ENCODE measurements at regions of chr13 and their contacts with region 1.

Region 1: DNA sequence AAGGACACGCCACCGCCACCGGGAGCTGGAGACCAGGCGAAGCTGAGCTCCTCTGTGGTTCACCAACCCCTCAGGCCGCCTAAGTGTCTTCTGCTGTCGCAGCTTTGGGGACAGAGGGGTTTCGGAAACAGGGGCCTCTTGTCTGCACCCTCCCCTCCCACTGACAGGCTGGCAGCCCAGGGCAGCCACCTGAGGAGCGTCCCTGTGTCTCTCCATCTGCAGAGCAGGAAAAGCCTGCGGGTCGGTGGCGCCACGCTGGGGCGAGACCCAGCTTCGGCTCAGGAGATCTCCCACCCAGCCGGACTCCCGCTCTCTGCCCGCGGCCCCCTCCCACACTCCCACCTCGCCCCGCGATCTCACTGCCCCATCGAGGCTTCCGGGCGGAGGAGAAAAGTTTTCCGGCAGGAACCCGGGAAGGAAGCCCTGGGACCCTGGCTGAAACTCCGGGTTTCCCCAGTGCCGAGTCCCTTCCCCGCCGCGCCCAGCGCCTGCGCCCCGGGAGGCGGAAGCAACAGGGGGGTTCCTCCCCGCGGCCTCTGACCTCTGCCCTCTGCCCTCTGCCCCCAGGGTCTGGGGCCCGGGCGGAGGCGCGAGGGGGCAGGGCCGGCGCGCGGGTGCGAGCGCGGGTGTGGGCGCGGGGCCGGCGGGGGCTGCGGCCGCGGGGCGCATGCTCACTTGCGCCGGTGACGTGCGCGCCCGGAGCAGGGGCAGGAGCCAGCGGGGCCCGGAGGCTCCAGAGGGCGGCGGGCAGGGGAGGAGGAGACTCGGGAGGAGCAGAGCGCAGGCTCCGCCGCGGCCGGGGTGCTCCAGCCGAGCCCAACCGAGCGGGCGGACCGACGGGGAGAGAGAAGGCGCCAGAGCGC is at the start of gene ATP11A:
- DNase-seq: peak; percentile 97
- H3K4me3 ChIP-seq: peak within 1 kb of the TSS; percentile 77 to 99 (median 88)
- H3K27ac ChIP-seq: peak within 1 kb of the TSS; percentile 87 to 95 (median 94)
- H3K4me1 ChIP-seq: peaks cover 0 to 48% (median 33%) of the 10 kb centered on the region in 4 donors
- H3K27me3 ChIP-seq: no peaks in the 10 kb centered on the region
- CTCF ChIP-seq: no peak
- EP300 ChIP-seq: no peak
- POLR2A ChIP-seq: peak in 1 of 2 donors; percentile 14
- total RNA-seq, gene ATP11A: 9.6 to 22.9 (median 15.9) TPM

Region 2: DNA sequence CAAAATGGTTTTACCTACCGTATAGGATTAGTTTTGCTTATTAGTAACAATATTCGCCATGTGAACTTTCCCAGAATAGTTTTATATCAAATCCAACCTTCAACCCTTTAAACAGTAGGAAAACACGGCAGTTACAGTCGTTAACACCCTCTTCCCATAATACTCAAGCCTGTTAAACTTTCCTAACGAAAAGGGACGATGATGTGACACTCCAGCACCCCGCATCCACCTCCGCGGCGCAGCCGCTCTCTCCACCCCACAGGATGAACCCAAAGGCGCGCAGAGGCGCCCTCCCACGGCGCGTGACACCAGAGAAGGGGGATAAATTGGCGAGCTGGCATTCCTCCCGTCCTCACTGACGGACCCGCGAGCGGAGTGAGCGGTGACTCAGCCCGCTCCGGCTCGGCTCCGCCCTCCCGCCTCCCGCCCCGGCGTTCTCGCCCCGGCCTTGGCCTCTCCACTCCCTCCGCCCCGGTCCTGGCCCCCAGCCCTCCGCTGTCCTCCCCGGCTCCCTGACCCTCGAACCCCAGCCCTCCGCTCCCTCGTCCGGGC is 102.2 kb before region 1 on chr13:
- intact Hi-C with region 1: loop called (anchors 5 kb)
- DNase-seq: peak; percentile 95
- H3K4me3 ChIP-seq: peak overlapping the region; percentile 78 to 90 (median 88)
- H3K27ac ChIP-seq: peak overlapping the region; percentile 96 to 99 (median 98)
- H3K4me1 ChIP-seq: peaks cover 0 to 30% (median 17%) of the 10 kb centered on the region in 4 donors
- H3K27me3 ChIP-seq: no peaks in the 10 kb centered on the region
- CTCF ChIP-seq: no peak
- EP300 ChIP-seq: no peak
- POLR2A ChIP-seq: no peak

Region 3: DNA sequence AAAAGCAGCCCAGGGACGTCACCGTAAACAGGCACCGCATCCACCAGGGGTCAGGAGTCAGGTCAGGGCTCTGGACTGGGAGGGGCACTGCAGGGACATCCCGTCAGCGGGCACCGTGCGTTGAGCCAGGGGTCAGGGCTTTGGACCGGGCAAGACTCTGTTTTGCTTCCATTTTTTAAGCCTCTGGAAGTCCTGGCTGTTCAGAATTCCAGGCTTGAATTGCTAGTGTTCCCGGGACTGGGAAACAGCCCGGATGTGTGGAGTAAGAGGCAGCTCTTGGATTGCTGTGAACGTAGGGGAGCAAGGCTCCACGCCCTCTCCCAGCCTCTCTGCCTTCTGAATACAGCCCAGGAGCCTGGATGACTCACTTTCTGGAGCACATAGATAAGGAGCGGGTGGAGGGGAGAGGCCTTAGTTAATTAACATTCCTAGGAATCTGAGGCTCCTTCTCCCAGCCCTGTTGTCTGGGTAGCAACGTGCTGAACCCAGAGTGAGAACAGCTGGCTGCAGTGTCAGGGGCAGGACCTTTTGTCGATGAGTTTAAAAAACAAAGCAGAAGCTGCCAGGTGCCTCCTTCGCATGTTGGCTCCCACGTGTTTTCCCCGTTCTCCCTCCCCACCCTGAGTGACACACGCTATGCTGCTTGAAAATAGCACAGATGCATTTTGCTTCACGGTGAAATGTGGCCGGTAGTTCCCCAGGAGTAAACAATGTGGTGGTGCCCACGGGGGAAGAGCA is 22.2 kb after region 1 on chr13:
- intact Hi-C with region 1: loop called (anchors 1 kb)
- DNase-seq: peak; percentile 95
- H3K4me3 ChIP-seq: peak overlapping the region in 3 of 4 donors; percentile 3 to 35 (median 27)
- H3K27ac ChIP-seq: peak overlapping the region; percentile 68 to 89 (median 85)
- H3K4me1 ChIP-seq: peaks cover 0 to 34% (median 22%) of the 10 kb centered on the region in 4 donors
- H3K27me3 ChIP-seq: no peaks in the 10 kb centered on the region
- CTCF ChIP-seq: no peak
- EP300 ChIP-seq: peak in 2 of 4 donors; percentile 34 to 43
- POLR2A ChIP-seq: no peak

Region 4: GRCh38 chr13:112725346-112726015 is 35.9 kb after region 1 on chr13:
- intact Hi-C with region 1: no loop called
- DNase-seq: peak; percentile 48
- H3K4me3 ChIP-seq: no peak overlapping the region
- H3K27ac ChIP-seq: no peak overlapping the region
- H3K4me1 ChIP-seq: peaks cover 0 to 21% (median 2%) of the 10 kb centered on the region in 4 donors
- H3K27me3 ChIP-seq: no peaks in the 10 kb centered on the region
- CTCF ChIP-seq: no peak
- EP300 ChIP-seq: no peak
- POLR2A ChIP-seq: no peak

Region 5: GRCh38 chr13:112783135-112783977 is 93.8 kb after region 1 on chr13:
- intact Hi-C with region 1: loop called (anchors 2 kb)
- DNase-seq: no peak
- H3K4me3 ChIP-seq: no peak overlapping the region
- H3K27ac ChIP-seq: peak overlapping the region in 3 of 4 donors; percentile 49 to 69 (median 49)
- H3K4me1 ChIP-seq: peaks cover 0 to 30% (median 23%) of the 10 kb centered on the region in 4 donors
- H3K27me3 ChIP-seq: no peaks in the 10 kb centered on the region
- CTCF ChIP-seq: no peak
- EP300 ChIP-seq: no peak
- POLR2A ChIP-seq: no peak

Measured in sigmoid colon (tissue), 7 donors.